A673 (cell line): ENCODE measurements at regions of chr22 and their contacts with region 1.

Region 1: GRCh38 chr22:31977141-31977841 is 33.0 kb downstream of the YWHAH start:
- DNase-seq: peak; percentile 83
- H3K4me3 ChIP-seq: no peak overlapping the region
- H3K27ac ChIP-seq: no peak overlapping the region
- H3K4me1 ChIP-seq: no peaks in the 10 kb centered on the region
- H3K27me3 ChIP-seq: no peaks in the 10 kb centered on the region
- CTCF ChIP-seq: peak; percentile 88

Region 2: DNA sequence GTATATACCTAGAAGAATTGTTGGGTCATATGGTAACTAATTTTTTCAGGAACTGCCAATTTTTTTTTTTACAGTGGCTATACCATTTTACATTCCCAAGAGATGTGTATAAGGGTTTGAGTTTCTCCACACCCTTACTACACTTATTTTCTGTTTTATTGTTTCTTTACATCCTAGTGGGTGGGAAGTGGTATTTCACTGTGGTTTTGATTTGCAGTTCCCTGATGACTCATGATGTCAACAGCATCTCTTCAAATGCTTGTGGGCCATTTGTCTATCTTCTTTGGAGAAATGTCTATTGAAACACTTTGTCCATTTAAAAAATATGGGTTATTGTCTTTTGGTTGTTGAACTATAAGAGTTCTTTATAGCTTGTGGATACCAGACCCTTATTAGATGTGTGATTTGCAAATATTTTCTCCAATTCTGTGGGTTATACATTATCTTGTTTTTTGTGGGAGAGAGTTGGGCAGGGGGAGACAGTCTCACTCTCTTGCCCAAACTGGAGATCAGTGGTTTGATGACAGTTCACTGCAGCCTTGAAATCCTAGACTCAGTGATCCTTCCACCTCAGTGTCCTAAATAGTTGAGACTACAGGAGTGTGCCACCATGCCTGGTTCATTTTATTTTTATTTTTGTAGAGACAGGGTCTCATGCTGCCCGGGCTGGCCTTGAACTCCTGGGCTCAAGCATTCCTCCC is 285.0 kb before region 1 on chr22:
- CTCF ChIA-PET with region 1: interaction called, 12 read pairs
- POLR2A ChIA-PET with region 1: no interaction called
- intact Hi-C with region 1: no loop called
- DNase-seq: no peak
- H3K4me3 ChIP-seq: no peak overlapping the region
- H3K27ac ChIP-seq: no peak overlapping the region
- H3K4me1 ChIP-seq: no peaks in the 10 kb centered on the region
- H3K27me3 ChIP-seq: no peaks in the 10 kb centered on the region
- CTCF ChIP-seq: no peak

Region 3: GRCh38 chr22:32080904-32081303 is 103.6 kb after region 1 on chr22:
- CTCF ChIA-PET with region 1: interaction called, 8 read pairs
- POLR2A ChIA-PET with region 1: no interaction called
- intact Hi-C with region 1: loop called (anchors 1 kb)
- DNase-seq: peak; percentile 69
- H3K4me3 ChIP-seq: no peak overlapping the region
- H3K27ac ChIP-seq: no peak overlapping the region
- H3K4me1 ChIP-seq: peaks cover 5% of the 10 kb centered on the region
- H3K27me3 ChIP-seq: no peaks in the 10 kb centered on the region
- CTCF ChIP-seq: peak; percentile 69

Region 4: GRCh38 chr22:32175683-32176644 is 198.7 kb after region 1 on chr22:
- CTCF ChIA-PET with region 1: no interaction called
- POLR2A ChIA-PET with region 1: no interaction called
- intact Hi-C with region 1: no loop called
- DNase-seq: no peak
- H3K4me3 ChIP-seq: no peak overlapping the region
- H3K27ac ChIP-seq: no peak overlapping the region
- H3K4me1 ChIP-seq: no peaks in the 10 kb centered on the region
- H3K27me3 ChIP-seq: peaks cover 61% of the 10 kb centered on the region
- CTCF ChIP-seq: no peak

Region 5: DNA sequence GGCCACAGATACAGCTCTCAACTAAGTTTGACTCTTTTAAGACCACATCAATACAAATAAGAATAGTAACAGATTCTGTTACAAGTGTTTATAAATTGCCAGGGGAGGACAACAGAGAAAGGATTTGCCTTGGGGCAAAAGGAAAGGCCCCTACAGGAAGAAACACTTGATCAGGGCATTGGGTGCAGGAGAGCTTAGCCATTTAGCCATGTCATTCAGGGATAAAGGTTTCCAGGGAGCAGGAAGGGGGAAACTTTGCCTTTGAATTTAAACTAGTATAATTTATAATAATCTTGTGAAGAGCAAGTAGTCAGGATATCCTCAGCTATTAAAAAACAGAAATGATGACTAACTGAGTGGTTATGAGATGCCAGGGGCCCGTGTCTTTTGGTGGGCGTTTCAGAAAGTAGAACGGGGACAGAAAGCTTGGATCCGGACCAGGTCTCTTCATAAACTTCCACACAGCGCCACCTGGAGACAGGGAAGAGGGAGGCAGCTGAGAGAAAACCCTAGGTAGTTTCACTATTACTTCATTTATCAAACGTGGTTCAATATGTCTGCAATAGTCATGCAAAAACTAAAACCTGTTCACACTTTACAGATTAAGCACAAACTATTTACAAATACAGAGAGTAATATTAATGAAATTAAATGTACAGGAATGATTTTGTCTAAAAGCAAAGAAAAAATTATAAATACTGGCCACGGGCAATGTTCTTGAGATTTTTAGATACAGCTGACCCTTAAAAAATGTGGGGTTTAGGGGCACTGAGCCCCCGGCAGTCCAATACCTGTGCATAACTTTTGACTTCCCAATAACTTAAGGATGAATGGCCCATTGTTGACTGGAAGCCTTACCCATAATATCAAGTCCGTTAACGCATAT is 288.8 kb after region 1 on chr22:
- CTCF ChIA-PET with region 1: interaction called, 6 read pairs
- POLR2A ChIA-PET with region 1: no interaction called
- intact Hi-C with region 1: loop called (anchors 2 kb)
- DNase-seq: peak; percentile 87
- H3K4me3 ChIP-seq: no peak overlapping the region
- H3K27ac ChIP-seq: no peak overlapping the region
- H3K4me1 ChIP-seq: no peaks in the 10 kb centered on the region
- H3K27me3 ChIP-seq: no peaks in the 10 kb centered on the region
- CTCF ChIP-seq: peak; percentile 92

Region 6: GRCh38 chr22:32378707-32379272 is 401.5 kb after region 1 on chr22:
- CTCF ChIA-PET with region 1: no interaction called
- POLR2A ChIA-PET with region 1: no interaction called
- intact Hi-C with region 1: loop called (anchors 5 kb)
- DNase-seq: peak; percentile 75
- H3K4me3 ChIP-seq: no peak overlapping the region
- H3K27ac ChIP-seq: no peak overlapping the region
- H3K4me1 ChIP-seq: no peaks in the 10 kb centered on the region
- H3K27me3 ChIP-seq: no peaks in the 10 kb centered on the region
- CTCF ChIP-seq: peak; percentile 93